Activated B cell treated with CpG ODN at 0.5 μM for 24 hours (primary cell): ENCODE measurements at regions of chr12 and their contacts with region 1.

Region 1: DNA sequence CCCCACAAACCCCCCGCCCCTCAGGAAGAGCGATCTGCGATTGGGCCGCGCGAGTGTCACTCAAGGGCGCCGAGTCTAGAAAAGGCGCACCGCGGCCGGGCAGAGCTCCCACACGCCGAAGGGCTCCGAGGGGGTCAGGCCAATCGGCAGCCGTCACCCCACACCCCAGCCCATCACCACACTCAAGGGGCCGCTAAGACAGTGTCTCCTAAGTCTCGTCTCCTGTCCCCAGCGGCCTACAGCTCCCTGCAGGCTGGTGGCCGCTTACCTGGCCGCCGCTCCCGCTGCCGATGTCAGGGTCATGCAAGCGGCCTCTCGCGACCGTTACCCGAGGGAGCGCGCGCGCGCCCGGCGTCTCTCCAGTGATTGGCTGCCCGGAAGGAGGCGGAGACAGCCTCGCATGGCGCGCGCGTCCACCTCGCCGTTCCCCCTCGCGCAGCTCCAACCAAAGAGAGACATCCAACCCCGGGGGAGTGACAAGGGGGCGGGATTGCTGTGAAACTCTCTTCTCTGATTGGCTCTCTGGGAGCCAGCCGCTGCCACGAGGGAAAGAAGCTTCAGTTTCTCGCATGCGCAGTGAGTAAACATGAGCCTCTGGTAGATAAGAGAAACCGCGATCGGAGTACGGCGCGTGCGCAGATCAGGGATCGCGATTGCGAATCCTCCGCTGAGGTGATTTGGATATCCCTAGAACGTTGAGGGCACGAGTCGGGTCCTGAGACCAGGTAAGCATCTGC is at the starts of genes MPHOSPH9 and MTRFR:
- DNase-seq: peak; percentile 96
- ATAC-seq: peak; percentile 90
- H3K4me3 Mint-ChIP-seq: peak within 1 kb of the TSS; percentile 98
- H3K27ac Mint-ChIP-seq: peak within 1 kb of the TSS; percentile 98
- H3K4me1 Mint-ChIP-seq: peaks cover 73% of the 10 kb centered on the region
- H3K27me3 Mint-ChIP-seq: peaks cover 3% of the 10 kb centered on the region
- CTCF ChIP-seq: no peak
- total RNA-seq, gene MPHOSPH9: 37.3 and 47.2 TPM in 2 replicates
- total RNA-seq, gene MTRFR: 23.5 and 23.6 TPM in 2 replicates

Region 2: GRCh38 chr12:122526683-122527477 is 706.1 kb before region 1 on chr12 and contains the starts of genes KNTC1 and RSRC2:
- CTCF ChIA-PET with region 1: no interaction called
- POLR2A ChIA-PET with region 1: interaction called, 4 read pairs
- intact Hi-C with region 1: loop called (anchors 10 kb)
- DNase-seq: peak; percentile 85
- ATAC-seq: peak; percentile 91
- H3K4me3 Mint-ChIP-seq: no peak within 1 kb of the TSS
- H3K27ac Mint-ChIP-seq: no peak within 1 kb of the TSS
- H3K4me1 Mint-ChIP-seq: peaks cover 43% of the 10 kb centered on the region
- H3K27me3 Mint-ChIP-seq: no peaks in the 10 kb centered on the region
- CTCF ChIP-seq: no peak
- total RNA-seq, gene KNTC1: 45.5 and 64.0 TPM in 2 replicates
- total RNA-seq, gene RSRC2: 106 and 126 TPM in 2 replicates

Region 3: GRCh38 chr12:122951979-122952892 is 280.7 kb before region 1 on chr12:
- CTCF ChIA-PET with region 1: interaction called, 8 read pairs
- POLR2A ChIA-PET with region 1: interaction called, 4 read pairs
- intact Hi-C with region 1: loop called (anchors 2 kb)
- DNase-seq: peak; percentile 60
- ATAC-seq: peak; percentile 96
- H3K4me3 Mint-ChIP-seq: no peak overlapping the region
- H3K27ac Mint-ChIP-seq: peak overlapping the region; percentile 18
- H3K4me1 Mint-ChIP-seq: peaks cover 24% of the 10 kb centered on the region
- H3K27me3 Mint-ChIP-seq: no peaks in the 10 kb centered on the region
- CTCF ChIP-seq: peak; percentile 79

Region 4: GRCh38 chr12:123085730-123086487 is 147.1 kb before region 1 on chr12:
- CTCF ChIA-PET with region 1: interaction called, 7 read pairs
- POLR2A ChIA-PET with region 1: interaction called, 15 read pairs
- intact Hi-C with region 1: no loop called
- DNase-seq: no peak
- ATAC-seq: peak; percentile 32
- H3K4me3 Mint-ChIP-seq: no peak overlapping the region
- H3K27ac Mint-ChIP-seq: no peak overlapping the region
- H3K4me1 Mint-ChIP-seq: peaks cover 73% of the 10 kb centered on the region
- H3K27me3 Mint-ChIP-seq: no peaks in the 10 kb centered on the region
- CTCF ChIP-seq: no peak

Region 5: GRCh38 chr12:123271001-123271729 is 38.2 kb after region 1 on chr12:
- CTCF ChIA-PET with region 1: interaction called, 6 read pairs
- POLR2A ChIA-PET with region 1: interaction called, 9 read pairs
- intact Hi-C with region 1: loop called (anchors 2 kb)
- DNase-seq: peak; percentile 76
- ATAC-seq: peak; percentile 81
- H3K4me3 Mint-ChIP-seq: no peak overlapping the region
- H3K27ac Mint-ChIP-seq: no peak overlapping the region
- H3K4me1 Mint-ChIP-seq: peaks cover 31% of the 10 kb centered on the region
- H3K27me3 Mint-ChIP-seq: no peaks in the 10 kb centered on the region
- CTCF ChIP-seq: no peak

Region 6: GRCh38 chr12:123601602-123602489 is 368.9 kb after region 1 on chr12 and contains the start of gene DDX55:
- CTCF ChIA-PET with region 1: no interaction called
- POLR2A ChIA-PET with region 1: interaction called, 10 read pairs
- intact Hi-C with region 1: no loop called
- DNase-seq: peak; percentile 86
- ATAC-seq: peak; percentile 89
- H3K4me3 Mint-ChIP-seq: peak within 1 kb of the TSS; percentile 97
- H3K27ac Mint-ChIP-seq: peak within 1 kb of the TSS; percentile 92
- H3K4me1 Mint-ChIP-seq: peaks cover 24% of the 10 kb centered on the region
- H3K27me3 Mint-ChIP-seq: no peaks in the 10 kb centered on the region
- CTCF ChIP-seq: no peak
- total RNA-seq, gene DDX55: 28.8 and 35.0 TPM in 2 replicates